Right ventricle myocardium superior (tissue), 1 donor: ENCODE measurements at regions of chr12 and their contacts with region 1.

Region 1: GRCh38 chr12:7806863-7807487 is 17.8 kb downstream of the NANOG start:
- DNase-seq: peak; percentile 69
- ATAC-seq: peak; percentile 67

Region 2: DNA sequence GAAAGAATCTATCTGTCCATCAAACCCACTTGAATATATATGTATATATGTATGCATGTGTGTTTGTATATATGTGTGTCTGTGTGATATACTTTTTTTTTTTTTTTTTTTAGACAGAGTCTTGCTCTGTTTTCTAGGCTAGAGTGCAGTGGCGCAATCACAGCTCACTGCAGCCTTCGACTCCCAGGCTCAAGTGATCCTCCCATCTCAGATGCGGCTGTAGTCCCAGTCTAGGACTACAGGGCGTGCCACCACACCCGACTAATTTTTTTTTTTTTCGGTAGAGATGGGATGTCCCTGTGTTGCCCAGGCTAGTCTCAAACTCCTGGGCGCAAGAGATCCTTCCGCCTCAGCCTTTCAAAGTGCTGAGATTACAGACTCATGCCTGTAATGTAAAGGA is 128.2 kb before region 1 on chr12:
- intact Hi-C with region 1: loop called (anchors 5 kb)
- DNase-seq: no peak
- ATAC-seq: no peak

Region 3: GRCh38 chr12:8078398-8078797 is 271.4 kb after region 1 on chr12:
- intact Hi-C with region 1: no loop called
- DNase-seq: no peak
- ATAC-seq: no peak

Region 4: GRCh38 chr12:8145754-8146441 is 338.9 kb after region 1 on chr12:
- intact Hi-C with region 1: no loop called
- DNase-seq: peak; percentile 72
- ATAC-seq: peak; percentile 65